ENCODE measurements at regions of chr20 and their contacts with region 1.

Region 1: DNA sequence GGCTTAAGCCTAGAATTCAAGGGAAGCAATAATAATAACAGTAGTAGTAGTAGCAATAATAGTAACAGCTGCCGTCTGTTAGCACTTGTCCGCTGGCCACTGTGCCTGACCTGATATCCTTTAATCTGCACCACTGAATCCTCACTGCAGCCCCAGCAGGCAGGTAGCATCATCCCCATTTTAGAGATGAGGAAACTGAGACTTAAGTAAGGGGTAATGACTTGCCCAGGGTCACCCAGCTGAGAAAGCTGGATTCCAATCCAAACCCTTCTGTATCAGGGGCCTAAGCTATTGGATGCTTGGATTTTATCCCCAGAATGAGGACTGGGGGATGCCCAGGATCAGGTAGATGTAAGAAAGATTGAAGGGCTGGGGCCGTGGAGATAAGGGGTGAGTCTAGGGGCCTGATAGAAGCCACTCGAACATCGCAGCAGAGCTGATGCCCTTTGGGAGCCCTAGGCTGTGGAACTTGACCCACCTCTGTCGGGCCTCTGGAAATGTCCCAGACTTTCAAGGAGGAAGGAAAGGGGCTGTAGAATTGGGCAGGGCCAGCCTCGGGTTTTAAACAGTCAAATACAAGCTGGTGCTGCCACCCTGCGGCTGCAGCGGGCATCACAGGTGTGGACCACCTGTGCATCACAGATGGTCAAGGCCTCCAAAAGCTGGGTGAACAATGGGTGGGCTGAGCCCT is 102.1 kb upstream of the MYL9 start:
- DNase-seq: peak; percentile 76
- H3K4me3 Mint-ChIP-seq: no peak overlapping the region
- H3K27ac Mint-ChIP-seq: no peak overlapping the region
- H3K4me1 Mint-ChIP-seq: peaks cover 2% of the 10 kb centered on the region
- H3K27me3 Mint-ChIP-seq: no peaks in the 10 kb centered on the region

Region 2: DNA sequence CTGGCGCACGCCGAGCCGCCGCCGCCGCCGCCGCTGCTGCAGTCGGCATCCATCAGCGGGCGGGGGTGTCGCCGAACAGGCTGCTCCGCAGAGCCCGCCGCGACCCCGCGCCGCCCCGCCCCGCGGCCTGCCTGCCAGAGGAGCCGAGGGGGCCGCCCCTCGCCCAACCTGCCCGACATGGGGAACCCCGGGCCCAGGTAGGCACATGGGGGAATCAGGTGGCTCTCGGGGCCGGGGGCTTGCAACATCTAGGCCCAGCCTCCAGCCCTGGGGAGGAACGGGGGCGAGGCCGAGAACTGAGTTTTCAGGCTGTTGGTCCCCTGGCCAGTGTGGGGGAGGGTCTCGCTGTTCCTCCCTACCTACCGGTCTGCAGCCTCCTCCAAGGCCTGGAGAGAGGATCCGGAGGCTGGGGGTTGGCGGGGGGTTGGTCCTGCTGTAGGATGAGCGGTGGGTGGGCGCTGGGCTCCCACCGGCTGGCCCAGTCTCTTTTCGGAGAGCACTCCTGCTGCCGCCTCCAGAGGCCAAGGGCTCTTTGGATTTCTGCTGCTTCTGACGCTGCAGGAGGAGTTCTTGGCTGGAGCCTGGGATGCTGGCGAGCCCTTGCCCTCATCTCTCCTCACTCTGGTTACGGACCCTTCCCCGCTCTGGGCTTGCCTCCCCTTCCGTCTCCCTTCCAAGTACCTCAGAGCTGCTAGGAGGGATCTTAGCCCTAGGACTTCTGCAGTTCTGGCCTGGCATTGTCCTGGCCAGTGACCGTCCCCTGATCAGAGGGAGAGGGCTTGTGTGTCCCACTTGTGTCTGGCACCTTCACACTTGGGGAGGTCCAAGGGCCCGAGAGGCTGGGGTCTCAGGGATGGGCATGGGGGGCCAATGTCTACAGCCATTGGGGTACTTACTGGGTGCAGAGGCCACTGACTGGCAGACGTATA is 284.2 kb before region 1 on chr20 and contains the start of gene EPB41L1:
- CTCF ChIA-PET with region 1: interaction called, 3 read pairs
- intact Hi-C with region 1: loop called (anchors 2 kb)
- DNase-seq: peak; percentile 20
- H3K4me3 Mint-ChIP-seq: peak within 1 kb of the TSS; percentile 47
- H3K27ac Mint-ChIP-seq: no peak within 1 kb of the TSS
- H3K4me1 Mint-ChIP-seq: peaks cover 4% of the 10 kb centered on the region
- H3K27me3 Mint-ChIP-seq: peaks cover 20% of the 10 kb centered on the region
- total RNA-seq, gene EPB41L1: 0.57 to 1.1 TPM

Region 3: DNA sequence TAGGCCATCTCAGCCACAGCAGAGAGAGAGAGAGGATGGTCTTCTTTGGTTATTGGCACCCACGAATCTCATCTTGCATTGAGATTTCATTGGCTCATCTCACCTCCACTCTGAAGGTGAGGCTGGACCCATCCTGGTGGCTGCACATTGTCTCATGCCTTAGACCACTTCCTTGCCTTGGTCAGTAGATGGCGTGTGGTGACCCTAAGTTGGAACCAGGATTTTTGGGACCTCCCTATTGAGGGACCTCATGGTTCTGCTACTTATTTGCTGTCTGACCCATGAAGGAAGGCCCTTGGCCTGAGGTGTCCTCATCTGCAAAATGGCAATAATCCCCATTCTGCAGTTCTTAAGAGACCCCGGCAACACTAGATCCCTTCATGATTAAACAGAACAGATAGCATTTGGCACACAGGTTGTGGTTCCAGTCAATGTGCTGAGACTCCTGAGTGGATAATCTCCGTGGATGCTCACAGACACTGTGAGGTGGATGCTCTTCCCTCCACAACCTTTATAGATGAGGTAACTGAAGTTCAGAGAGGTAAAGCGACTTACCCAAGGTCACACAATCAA is 224.4 kb before region 1 on chr20:
- CTCF ChIA-PET with region 1: interaction called, 10 read pairs
- intact Hi-C with region 1: loop called (anchors 1 kb)
- DNase-seq: peak; percentile 27
- H3K4me3 Mint-ChIP-seq: no peak overlapping the region
- H3K27ac Mint-ChIP-seq: no peak overlapping the region
- H3K4me1 Mint-ChIP-seq: no peaks in the 10 kb centered on the region
- H3K27me3 Mint-ChIP-seq: no peaks in the 10 kb centered on the region

Region 4: DNA sequence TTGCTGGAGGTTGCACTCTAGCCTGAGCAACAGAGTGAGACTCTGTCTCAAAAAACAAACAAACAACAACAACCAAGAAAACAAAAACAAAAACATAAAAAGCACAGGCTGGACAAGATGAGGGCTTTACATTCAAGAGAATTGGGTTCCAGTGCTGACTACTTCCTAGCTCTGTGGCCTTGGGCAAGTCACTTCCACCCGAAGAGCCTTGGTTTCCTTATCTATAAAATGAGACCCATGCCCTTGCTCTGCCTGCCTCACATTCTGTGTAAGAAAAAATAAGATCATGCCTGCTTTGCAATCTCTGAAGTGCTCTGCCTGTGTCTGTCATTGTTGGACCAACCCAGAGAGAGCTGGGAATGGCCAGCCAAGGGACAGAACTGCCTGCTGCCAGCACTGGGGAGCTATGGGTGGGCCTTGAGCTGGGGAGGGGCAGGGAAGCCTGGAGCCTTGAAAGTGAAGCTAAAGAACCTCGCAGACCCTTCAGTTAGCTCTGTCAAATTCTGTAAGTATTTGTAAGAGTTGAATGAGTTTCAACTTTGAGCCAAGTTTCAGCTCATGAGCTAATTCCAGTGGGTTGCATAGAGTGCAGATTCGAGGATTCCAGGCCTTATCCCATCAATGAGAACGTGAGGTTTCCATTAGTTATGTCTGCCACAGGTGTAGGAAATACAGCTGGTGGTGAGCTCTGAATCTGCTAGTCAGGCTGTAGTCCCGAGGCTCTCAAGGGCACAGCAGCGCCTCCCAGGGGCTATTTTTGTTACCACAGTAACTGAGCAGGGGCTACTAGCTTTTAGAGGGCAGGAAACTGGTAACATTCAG is 39.8 kb before region 1 on chr20:
- CTCF ChIA-PET with region 1: interaction called, 17 read pairs
- intact Hi-C with region 1: no loop called
- DNase-seq: peak; percentile 76
- H3K4me3 Mint-ChIP-seq: no peak overlapping the region
- H3K27ac Mint-ChIP-seq: no peak overlapping the region
- H3K4me1 Mint-ChIP-seq: no peaks in the 10 kb centered on the region
- H3K27me3 Mint-ChIP-seq: peaks cover 27% of the 10 kb centered on the region

Region 5: DNA sequence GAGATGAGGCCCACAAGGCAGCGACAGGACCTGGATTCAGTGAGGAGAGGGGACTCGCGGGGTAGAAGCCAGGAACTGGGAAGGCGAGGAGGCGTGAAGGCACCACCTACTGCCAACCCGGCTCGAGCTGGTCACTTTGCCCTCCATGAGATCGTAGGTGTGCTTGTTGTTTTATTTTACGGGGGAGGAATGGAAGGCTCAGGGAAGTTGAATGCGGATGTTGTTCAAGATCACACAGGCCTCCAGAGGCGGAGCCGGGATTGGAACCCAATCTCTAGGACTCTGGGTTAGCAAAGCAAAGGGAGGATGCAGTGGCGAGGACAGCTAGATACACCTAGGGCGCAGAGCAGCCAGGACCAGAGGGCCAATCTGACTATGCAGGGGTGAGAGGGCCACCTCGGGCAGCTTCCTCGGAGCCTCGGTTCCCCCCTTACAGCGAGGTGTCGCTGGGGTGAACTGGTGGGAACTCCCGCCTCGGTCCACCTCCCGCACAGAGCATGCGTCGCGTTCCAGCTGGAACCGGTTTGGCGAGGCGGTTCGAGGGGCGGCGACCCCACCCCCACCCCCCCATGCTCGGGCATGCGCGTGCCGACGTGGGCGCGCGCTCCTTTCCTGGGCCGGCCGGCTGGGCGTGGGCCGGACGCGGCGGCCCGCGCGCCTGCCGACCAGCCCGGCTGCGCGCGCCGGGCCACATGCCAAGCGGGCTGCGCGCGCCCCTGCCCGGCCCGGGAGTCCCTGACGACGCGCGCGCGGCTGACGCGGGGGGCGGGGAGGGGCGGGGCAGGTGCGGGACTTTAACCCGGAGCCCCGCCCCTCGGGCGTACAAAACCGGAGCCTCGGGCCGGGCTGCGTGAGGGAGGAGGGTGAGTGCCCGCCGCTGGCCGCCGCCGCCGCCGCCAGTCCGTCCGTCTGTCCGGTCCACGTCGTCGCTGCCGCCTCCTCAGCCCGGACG is 21.7 kb after region 1 on chr20:
- CTCF ChIA-PET with region 1: interaction called, 6 read pairs
- intact Hi-C with region 1: loop called (anchors 2 kb)
- DNase-seq: peak; percentile 89
- H3K4me3 Mint-ChIP-seq: peak overlapping the region; percentile 74
- H3K27ac Mint-ChIP-seq: peak overlapping the region; percentile 52
- H3K4me1 Mint-ChIP-seq: peaks cover 47% of the 10 kb centered on the region
- H3K27me3 Mint-ChIP-seq: no peaks in the 10 kb centered on the region